Common myeloid progenitor, CD34-positive (primary cell): ENCODE measurements at regions of chr10 and their contacts with region 1.

Region 1: GRCh38 chr10:67779465-67780203 is 58.4 kb downstream of the DNAJC12 start:
- DNase-seq: peak; percentile 86 to 94 (median 91)
- H3K4me3 ChIP-seq: no peak overlapping the region
- H3K27ac ChIP-seq: no peak overlapping the region
- H3K4me1 ChIP-seq: peaks cover 0 to 13% (median 7%) of the 10 kb centered on the region in 4 experiments
- H3K27me3 ChIP-seq: no peaks in the 10 kb centered on the region

Region 2: GRCh38 chr10:67666416-67667034 is 113.1 kb before region 1 on chr10:
- CTCF ChIA-PET with region 1: interaction called, 48 read pairs
- POLR2A ChIA-PET with region 1: no interaction called
- DNase-seq: peak; percentile 22 to 60 (median 59)
- H3K4me3 ChIP-seq: no peak overlapping the region
- H3K27ac ChIP-seq: no peak overlapping the region
- H3K4me1 ChIP-seq: no peaks in the 10 kb centered on the region
- H3K27me3 ChIP-seq: no peaks in the 10 kb centered on the region

Region 3: DNA sequence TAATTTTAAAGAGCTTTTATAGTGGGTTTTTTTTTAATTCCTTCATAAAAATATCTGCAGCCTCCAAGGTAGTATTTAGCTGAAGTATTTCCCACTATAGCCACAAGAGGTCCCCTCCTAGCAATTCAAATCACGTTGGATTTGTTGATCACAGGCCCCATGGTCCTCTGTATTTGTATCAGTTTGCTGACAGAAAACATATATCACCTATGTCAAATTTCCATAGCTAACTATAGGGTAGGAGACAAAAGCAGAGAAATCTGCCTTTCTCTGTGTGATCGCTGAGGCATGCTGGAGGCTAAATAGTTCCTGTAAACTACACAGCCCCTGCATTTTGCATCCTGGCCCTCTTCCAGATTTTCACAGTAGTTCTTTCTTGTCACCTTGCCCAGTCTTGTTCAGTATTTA is 81.9 kb before region 1 on chr10:
- CTCF ChIA-PET with region 1: interaction called, 124 read pairs
- POLR2A ChIA-PET with region 1: interaction called, 3 read pairs
- DNase-seq: peak; percentile 56 to 73 (median 70)
- H3K4me3 ChIP-seq: peak overlapping the region in 1 of 7 experiments; percentile 33
- H3K27ac ChIP-seq: no peak overlapping the region
- H3K4me1 ChIP-seq: peaks cover 0 to 3% (median 0%) of the 10 kb centered on the region in 4 experiments
- H3K27me3 ChIP-seq: peaks cover 0 to 6% (median 3%) of the 10 kb centered on the region in 5 experiments

Region 4: GRCh38 chr10:67767245-67767644 is 12.4 kb before region 1 on chr10:
- CTCF ChIA-PET with region 1: interaction called, 15 read pairs
- POLR2A ChIA-PET with region 1: no interaction called
- DNase-seq: peak in 1 of 3 donors; percentile 11
- H3K4me3 ChIP-seq: no peak overlapping the region
- H3K27ac ChIP-seq: no peak overlapping the region
- H3K4me1 ChIP-seq: peaks cover 3 to 13% (median 10%) of the 10 kb centered on the region in 4 experiments
- H3K27me3 ChIP-seq: no peaks in the 10 kb centered on the region